PC-3 (cell line): ENCODE measurements at regions of chr13 and their contacts with region 1.

Region 1: DNA sequence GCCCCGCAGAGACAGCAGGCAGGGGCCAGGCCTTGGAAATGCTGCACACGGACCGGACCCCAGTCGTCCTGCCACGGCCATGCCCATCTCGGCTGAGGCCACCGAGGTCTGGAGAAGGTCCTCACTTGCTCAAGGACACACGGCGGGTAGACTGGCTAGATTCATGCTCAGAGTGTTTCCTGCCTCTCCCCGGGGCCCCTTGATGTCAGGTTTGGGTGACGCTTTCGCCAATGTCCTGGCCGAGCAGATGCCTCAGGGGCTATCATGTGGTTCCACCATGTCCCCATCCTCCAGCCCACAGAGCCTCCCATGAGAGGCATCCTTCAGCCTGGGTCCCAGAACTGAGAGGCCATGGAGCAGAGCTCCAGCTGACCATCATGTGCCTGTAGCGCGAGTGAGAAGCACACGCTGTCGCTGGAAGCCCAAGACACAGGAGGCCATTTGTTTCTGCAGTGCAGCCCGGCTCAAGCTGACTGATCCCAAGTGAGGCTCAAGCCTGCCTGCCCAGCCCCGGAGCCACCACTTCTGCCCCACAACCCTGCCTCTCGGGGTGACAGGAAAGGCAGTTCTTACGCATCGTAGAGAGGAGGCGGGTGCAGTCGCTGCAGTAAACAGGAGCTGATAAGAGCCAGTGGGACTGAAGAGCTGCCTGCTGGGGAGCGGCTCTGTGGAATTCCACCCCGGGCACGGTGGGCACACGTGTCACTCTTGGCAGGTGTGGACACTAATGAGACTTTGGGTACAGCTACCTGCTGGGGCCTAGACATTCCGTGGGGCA is 53.9 kb upstream of the GAS6 start:
- DNase-seq: no peak
- ATAC-seq: no peak
- H3K4me3 ChIP-seq: no peak overlapping the region
- H3K27ac ChIP-seq: no peak overlapping the region
- H3K4me1 ChIP-seq: peaks cover 12% of the 10 kb centered on the region
- H3K27me3 ChIP-seq: no peaks in the 10 kb centered on the region
- CTCF ChIP-seq: no peak

Region 2: DNA sequence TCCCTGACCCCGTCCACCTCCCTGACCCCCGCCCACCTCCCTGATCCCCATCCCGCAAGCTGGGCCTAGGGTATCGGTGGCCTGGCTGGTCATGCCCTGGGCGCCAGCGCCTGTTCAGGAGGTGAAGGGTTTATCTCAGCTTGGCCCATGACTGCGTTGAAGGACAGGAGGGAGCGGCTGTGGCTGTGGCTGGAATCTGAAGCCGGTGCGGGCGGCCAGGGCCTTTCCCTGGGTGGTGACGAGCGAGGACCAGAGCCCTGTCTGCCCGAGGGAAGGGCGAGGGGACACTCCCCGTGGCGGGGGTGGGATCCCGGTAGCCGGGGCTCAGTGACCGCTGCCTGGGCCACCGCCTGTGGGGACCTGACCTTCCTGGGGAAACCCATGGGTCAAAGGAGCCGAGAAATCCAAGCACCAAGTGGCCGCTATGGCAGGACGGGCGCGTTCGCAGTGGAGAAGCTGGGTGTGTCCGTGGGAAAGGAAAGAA is 74.6 kb before region 1 on chr13:
- CTCF ChIA-PET with region 1: no interaction called
- POLR2A ChIA-PET with region 1: interaction called, 36 read pairs
- intact Hi-C with region 1: no loop called
- DNase-seq: no peak
- ATAC-seq: no peak
- H3K4me3 ChIP-seq: no peak overlapping the region
- H3K27ac ChIP-seq: no peak overlapping the region
- H3K4me1 ChIP-seq: peaks cover 13% of the 10 kb centered on the region
- H3K27me3 ChIP-seq: no peaks in the 10 kb centered on the region
- CTCF ChIP-seq: no peak